Lower leg skin (tissue), 4 donors: ENCODE measurements at regions of chr19 and their contacts with region 1.

Region 1: DNA sequence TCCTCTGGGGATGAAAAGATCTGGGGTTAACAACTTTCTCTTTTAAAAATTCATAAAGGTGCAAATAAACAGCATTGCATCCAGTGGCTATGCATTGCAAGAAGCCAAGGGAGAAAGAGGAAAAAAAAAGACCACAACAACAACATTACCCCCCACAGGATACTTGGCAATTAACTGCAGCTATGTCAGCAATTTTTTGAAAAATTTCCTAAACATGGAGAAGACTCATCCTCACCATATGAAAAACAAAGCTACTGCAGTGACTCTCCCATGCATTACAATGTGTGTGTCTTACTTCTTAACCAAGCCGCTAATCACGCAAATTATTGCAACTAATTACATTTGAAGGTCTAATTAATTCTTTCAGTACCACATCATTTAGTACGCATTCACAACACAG is 309.8 kb upstream of the ZNF507 start:
- DNase-seq: no peak
- H3K4me3 ChIP-seq: no peak overlapping the region
- CTCF ChIP-seq: no peak
- POLR2A ChIP-seq: no peak

Region 2: DNA sequence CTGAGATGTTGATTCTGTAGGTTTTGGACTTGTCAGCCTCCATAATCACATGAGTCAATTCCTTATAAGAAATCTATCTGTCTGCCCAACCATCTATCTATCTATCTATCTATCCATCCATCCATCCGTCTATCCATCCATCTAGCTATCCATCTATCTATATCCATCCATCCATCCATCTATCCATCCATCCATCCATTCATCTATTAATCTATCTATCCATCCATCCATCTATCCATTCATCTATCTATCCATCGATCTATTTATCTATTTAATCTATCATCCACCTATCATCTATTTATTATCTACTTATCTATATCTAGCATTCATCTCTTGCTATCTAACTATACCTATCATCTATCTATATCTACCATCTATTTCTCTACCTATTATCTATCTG is 47.4 kb before region 1 on chr19:
- intact Hi-C with region 1: loop called (anchors 2 kb)
- DNase-seq: no peak
- H3K4me3 ChIP-seq: no peak overlapping the region
- CTCF ChIP-seq: no peak
- POLR2A ChIP-seq: no peak

Region 3: DNA sequence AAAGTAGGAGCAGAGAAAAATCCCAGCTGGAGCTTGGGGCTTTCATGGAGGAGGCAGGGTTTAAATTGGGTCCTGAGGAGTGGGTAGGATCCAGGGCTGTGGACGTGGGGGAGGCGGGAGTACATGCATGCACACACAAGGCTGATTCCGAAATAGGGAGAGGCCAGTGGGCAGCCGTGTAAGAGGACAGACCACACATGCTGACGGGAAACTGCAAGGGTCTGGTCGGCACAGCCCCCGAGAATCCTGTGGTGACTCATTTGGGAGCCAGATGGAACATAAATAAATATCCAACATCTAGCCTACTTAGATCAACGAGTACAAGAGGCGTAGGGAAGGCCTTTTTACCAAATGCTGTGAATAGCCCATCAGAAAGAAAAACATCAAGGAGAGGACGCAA is 93.5 kb after region 1 on chr19:
- intact Hi-C with region 1: no loop called
- DNase-seq: no peak
- H3K4me3 ChIP-seq: no peak overlapping the region
- CTCF ChIP-seq: no peak
- POLR2A ChIP-seq: no peak